GM10248 (cell line): ENCODE measurements at regions of chr7 and their contacts with region 1.

Region 1: DNA sequence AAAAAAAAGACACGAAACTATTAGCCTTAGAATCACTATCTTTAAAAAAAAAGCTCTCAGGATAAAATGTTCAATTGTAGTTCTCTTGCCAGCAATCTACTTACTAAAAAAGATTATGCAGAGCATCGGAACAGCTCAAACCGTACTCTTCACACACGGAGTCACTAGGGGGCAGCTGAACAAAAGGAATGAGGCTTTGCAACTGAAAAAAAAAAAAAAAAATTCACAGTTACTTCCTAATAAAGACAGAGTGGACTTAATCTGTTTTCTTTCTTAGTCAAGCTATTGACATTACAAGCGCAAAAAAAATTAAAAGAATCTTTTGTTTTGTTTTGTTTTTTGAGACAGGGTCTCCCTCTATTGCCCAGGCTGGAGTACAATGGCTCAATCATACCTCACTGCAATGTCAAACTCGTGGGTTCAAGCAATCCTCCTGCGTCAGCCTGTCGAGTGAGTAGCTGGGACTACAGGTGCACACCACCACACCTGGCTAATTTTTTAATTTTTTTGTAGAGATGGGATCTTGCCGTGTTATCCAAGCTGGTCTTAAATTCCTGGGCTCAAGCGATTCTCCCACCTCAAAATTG is 11.5 kb downstream of the PMS2 start:
- DNase-seq: peak; percentile 45
- CTCF ChIP-seq: peak; percentile 36

Region 2: GRCh38 chr7:5494683-5495561 is 502.4 kb before region 1 on chr7:
- CTCF ChIA-PET with region 1: no interaction called
- POLR2A ChIA-PET with region 1: no interaction called
- DNase-seq: peak; percentile 87
- CTCF ChIP-seq: peak; percentile 95

Region 3: DNA sequence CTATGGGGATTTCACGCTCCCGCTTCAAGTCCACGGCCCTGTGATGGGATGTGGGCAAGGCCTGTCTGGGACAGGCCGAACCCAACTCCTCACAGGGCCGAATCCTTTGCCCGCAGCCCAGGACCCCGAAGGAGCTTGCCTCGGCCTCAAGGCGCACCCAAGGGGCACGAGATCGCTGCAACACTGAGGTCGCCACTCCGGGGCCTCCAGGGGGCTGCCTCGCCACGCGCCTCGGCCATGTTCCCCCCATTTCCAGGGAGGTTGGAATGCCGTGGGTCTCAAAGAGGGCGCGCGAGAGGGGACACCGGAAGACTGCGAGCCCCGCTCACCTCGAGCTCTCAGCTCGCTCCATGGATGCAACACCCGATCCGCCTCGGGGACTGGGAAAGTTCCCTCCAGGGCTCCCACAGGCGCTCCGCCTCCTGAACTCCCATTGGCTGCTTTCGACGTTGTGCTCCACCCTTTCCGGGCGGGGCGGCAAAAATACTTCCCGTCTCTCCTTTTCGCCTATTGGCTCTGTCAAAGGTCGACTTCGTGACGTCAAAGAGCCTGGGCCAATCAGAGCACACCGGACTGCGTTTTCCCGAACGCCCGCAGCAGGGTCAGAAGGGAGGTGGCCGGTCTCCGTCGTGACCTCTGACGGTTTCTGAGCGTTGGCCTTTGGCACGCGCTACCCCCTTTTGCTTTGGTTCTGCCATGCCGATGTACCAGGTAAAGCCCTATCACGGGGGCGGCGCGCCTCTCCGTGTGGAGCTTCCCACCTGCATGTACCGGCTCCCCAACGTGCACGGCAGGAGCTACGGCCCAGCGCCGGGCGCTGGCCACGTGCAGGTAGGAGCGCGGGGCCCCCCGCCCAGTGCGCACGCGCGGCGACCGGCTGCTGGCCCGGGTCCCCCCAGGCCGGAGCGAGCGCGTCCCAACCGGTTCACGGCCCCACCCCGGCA is 11.6 kb after region 1 on chr7 and contains the starts of genes AIMP2 and PMS2:
- CTCF ChIA-PET with region 1: interaction called, 11 read pairs
- POLR2A ChIA-PET with region 1: no interaction called
- DNase-seq: peak; percentile 94
- CTCF ChIP-seq: peak; percentile 10

Region 4: DNA sequence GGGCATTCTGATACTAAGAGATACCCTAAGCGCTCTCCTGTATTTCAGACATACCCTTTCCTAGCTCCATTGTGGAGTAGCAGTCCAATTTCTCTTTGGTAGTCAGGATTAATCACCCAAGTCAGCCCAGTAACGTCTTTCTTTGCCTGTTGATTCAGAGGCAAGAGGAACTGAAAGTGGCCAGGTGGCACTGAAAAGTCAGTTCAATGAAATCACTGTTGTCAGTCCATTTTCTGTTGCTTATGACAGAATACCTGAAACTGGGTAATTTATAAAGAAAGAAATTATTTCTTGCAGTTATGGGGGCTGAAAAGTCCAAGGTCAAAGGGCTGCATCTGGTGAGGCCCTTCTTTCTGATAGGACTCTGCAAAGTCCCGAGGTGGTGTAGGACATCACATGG is 74.1 kb after region 1 on chr7:
- CTCF ChIA-PET with region 1: no interaction called
- POLR2A ChIA-PET with region 1: no interaction called
- DNase-seq: peak; percentile 26
- CTCF ChIP-seq: no peak